GM10248 (cell line): ENCODE measurements at regions of chr10 and their contacts with region 1.

Region 1: GRCh38 chr10:24811881-24812622 is 88.4 kb upstream of the ARHGAP21 start:
- DNase-seq: no peak
- CTCF ChIP-seq: no peak

Region 2: GRCh38 chr10:24707445-24707844 is 104.6 kb before region 1 on chr10:
- CTCF ChIA-PET with region 1: no interaction called
- POLR2A ChIA-PET with region 1: no interaction called
- DNase-seq: peak; percentile 23
- CTCF ChIP-seq: no peak

Region 3: GRCh38 chr10:24800861-24801260 is 11.2 kb before region 1 on chr10:
- CTCF ChIA-PET with region 1: interaction called, 21 read pairs
- POLR2A ChIA-PET with region 1: no interaction called
- DNase-seq: no peak
- CTCF ChIP-seq: no peak